ENCODE measurements at regions of chr5 and their contacts with region 1.

Region 1: GRCh38 chr5:96614110-96614691 is 48.0 kb upstream of the CAST start:
- DNase-seq: peak; percentile 25
- ATAC-seq: peak; percentile 86
- H3K4me3 ChIP-seq: no peak overlapping the region
- H3K27ac ChIP-seq: no peak overlapping the region
- H3K4me1 ChIP-seq: no peaks in the 10 kb centered on the region
- H3K27me3 ChIP-seq: no peaks in the 10 kb centered on the region; a peak in 2 of 4 replicates
- CTCF ChIP-seq: peak; percentile 24 to 71 (median 45); a peak in 4 of 6 replicates
- EP300 ChIP-seq: no peak
- POLR2A ChIP-seq: no peak
- RAD21 ChIP-seq: peak; percentile 87

Region 2: DNA sequence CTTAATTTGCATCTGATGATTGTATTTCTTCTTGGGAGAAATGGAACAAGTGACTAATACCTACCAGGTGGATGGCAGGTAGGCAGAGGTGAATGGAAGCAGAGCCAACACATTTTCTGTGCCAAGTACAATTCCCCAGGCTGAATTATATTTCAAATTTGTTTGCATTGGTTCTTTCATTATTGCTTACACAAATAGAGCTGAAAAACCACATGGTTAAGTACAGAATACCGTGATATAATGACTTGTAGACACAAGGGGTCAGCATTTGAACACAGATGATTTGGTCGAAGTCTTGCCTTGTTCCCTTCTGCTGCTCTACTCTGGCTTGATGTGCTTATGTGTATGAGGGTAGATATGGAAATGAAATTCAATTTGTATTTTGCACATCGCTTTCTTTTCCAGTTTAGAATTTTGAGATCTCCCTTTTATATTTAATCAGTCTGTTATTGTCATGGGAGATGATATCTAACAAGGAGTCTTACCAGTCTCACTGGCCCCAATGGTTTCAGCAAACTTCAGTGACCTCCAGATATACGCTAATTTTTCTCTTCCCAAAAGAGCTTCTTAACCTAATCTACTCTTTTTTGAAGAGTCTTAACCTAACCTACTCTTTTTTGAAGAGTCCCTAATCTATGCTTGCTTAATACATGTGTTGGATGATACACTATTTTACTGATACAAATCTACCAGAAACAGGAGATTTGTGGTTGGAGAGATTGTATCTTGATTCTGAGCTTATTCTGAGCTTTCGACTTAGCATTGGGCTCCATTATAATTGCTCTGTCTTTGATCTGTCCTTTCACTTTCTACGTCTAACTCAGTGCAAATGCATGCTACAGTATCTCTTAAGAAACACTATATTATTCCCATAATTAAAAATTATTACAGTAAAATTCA is 269.3 kb before region 1 on chr5:
- CTCF ChIA-PET with region 1: interaction called, 5 read pairs
- POLR2A ChIA-PET with region 1: no interaction called
- RAD21 ChIA-PET with region 1: interaction called, 7 read pairs
- SMC1A ChIA-PET with region 1: interaction called, 12 read pairs
- in situ Hi-C with region 1: no loop called
- intact Hi-C with region 1: no loop called
- DNase-seq: peak; percentile 59
- ATAC-seq: peak; percentile 99
- H3K4me3 ChIP-seq: no peak overlapping the region
- H3K27ac ChIP-seq: no peak overlapping the region
- H3K4me1 ChIP-seq: no peaks in the 10 kb centered on the region
- H3K27me3 ChIP-seq: no peaks in the 10 kb centered on the region
- CTCF ChIP-seq: peak; percentile 37 to 79 (median 66); a peak in 5 of 6 replicates
- EP300 ChIP-seq: no peak
- POLR2A ChIP-seq: no peak
- RAD21 ChIP-seq: peak; percentile 89

Region 3: DNA sequence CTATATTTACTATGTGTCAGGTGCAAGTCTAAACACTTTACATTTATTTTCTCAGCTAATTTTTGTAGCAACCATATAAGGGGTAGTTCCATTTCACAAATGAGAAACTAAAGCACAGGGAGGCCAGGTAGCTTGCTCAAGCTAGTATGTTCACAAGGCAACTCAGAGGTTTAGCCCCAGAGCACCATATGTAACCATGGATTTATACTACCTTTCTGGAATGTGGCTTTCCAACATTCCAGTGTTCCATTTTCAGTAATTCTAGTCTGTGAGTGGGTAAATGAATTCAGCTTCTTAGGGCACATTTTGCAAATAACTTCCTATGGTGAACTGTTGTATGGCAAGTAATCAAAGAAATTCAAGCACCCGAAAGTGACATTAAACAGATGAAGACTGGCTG is 23.0 kb after region 1 on chr5:
- CTCF ChIA-PET with region 1: interaction called, 20 read pairs
- POLR2A ChIA-PET with region 1: no interaction called
- RAD21 ChIA-PET with region 1: no interaction called
- SMC1A ChIA-PET with region 1: interaction called, 16 read pairs
- in situ Hi-C with region 1: no loop called
- intact Hi-C with region 1: no loop called
- DNase-seq: no peak
- ATAC-seq: no peak
- H3K4me3 ChIP-seq: no peak overlapping the region
- H3K27ac ChIP-seq: no peak overlapping the region
- H3K4me1 ChIP-seq: no peaks in the 10 kb centered on the region
- H3K27me3 ChIP-seq: no peaks in the 10 kb centered on the region; a peak in 2 of 4 replicates
- CTCF ChIP-seq: no peak
- EP300 ChIP-seq: no peak
- POLR2A ChIP-seq: no peak
- RAD21 ChIP-seq: no peak

Region 4: GRCh38 chr5:96687812-96688453 is 73.7 kb after region 1 on chr5:
- CTCF ChIA-PET with region 1: interaction called, 204 read pairs
- POLR2A ChIA-PET with region 1: interaction called, 4 read pairs
- RAD21 ChIA-PET with region 1: interaction called, 78 read pairs
- SMC1A ChIA-PET with region 1: interaction called, 71 read pairs
- in situ Hi-C with region 1: no loop called
- intact Hi-C with region 1: loop called (anchors 1 kb)
- DNase-seq: no peak
- ATAC-seq: peak; percentile 99
- H3K4me3 ChIP-seq: no peak overlapping the region
- H3K27ac ChIP-seq: no peak overlapping the region
- H3K4me1 ChIP-seq: no peaks in the 10 kb centered on the region
- H3K27me3 ChIP-seq: no peaks in the 10 kb centered on the region
- CTCF ChIP-seq: peak; percentile 55 to 65 (median 56)
- EP300 ChIP-seq: no peak
- POLR2A ChIP-seq: no peak
- RAD21 ChIP-seq: peak; percentile 79

Region 5: DNA sequence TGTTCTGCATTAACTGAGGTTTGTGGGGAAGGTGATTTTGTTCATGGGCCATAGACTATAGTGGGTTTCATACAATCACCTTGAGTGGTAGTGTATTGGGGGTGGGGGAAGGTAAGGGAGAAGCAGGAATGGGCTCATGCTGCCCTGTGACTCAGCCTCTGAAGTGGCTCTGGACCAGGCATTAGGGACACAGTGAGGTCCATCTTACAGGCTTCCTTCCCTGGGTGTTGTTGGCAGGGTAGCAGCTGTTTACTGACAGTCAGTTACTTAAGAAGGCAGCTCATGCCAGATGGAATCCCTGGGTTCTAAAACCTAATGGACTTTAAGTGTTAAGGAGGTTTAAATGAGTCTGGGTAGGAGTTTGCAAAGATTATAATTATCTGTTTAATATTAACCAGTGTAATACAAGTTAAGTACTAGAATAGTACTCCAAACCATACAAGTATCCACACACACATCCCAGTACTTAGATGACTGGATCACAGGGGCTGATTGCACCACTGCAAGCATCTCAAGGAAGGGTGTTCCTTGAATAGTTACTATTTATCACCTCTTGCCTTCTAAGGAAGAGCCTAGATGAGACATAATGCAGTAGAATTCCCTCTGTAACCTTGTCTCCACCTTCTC is 107.3 kb after region 1 on chr5:
- CTCF ChIA-PET with region 1: interaction called, 17 read pairs
- POLR2A ChIA-PET with region 1: no interaction called
- RAD21 ChIA-PET with region 1: interaction called, 3 read pairs
- SMC1A ChIA-PET with region 1: interaction called, 3 read pairs
- in situ Hi-C with region 1: no loop called
- intact Hi-C with region 1: no loop called
- DNase-seq: no peak
- ATAC-seq: peak; percentile 27; the same call in 2 of the 3 replicates
- H3K4me3 ChIP-seq: no peak overlapping the region
- H3K27ac ChIP-seq: no peak overlapping the region
- H3K4me1 ChIP-seq: no peaks in the 10 kb centered on the region
- H3K27me3 ChIP-seq: no peaks in the 10 kb centered on the region
- CTCF ChIP-seq: no peak
- EP300 ChIP-seq: no peak
- POLR2A ChIP-seq: no peak
- RAD21 ChIP-seq: no peak

Region 6: GRCh38 chr5:96752341-96753016 is 138.3 kb after region 1 on chr5:
- CTCF ChIA-PET with region 1: interaction called, 40 read pairs
- POLR2A ChIA-PET with region 1: interaction called, 5 read pairs
- RAD21 ChIA-PET with region 1: interaction called, 23 read pairs
- SMC1A ChIA-PET with region 1: interaction called, 11 read pairs
- in situ Hi-C with region 1: no loop called
- intact Hi-C with region 1: no loop called
- DNase-seq: no peak
- ATAC-seq: peak; percentile 63
- H3K4me3 ChIP-seq: no peak overlapping the region
- H3K27ac ChIP-seq: no peak overlapping the region
- H3K4me1 ChIP-seq: no peaks in the 10 kb centered on the region
- H3K27me3 ChIP-seq: no peaks in the 10 kb centered on the region
- CTCF ChIP-seq: peak; percentile 54 to 61 (median 58); a peak in 5 of 6 replicates
- EP300 ChIP-seq: no peak
- POLR2A ChIP-seq: no peak
- RAD21 ChIP-seq: peak; percentile 65

Measured in GM12878 (cell line).